ENCODE measurements at regions of chr12 and their contacts with region 1.

Region 1: GRCh38 chr12:122895705-122896636 is at the start of gene VPS37B:
- DNase-seq: peak; percentile 87
- ATAC-seq: peak; percentile 40
- H3K4me3 Mint-ChIP-seq: peak within 1 kb of the TSS; percentile 97
- H3K27ac Mint-ChIP-seq: peak within 1 kb of the TSS; percentile 92
- H3K4me1 Mint-ChIP-seq: peaks cover 96% of the 10 kb centered on the region
- H3K27me3 Mint-ChIP-seq: no peaks in the 10 kb centered on the region
- CTCF ChIP-seq: no peak
- total RNA-seq, gene VPS37B: 51.4 and 54.1 TPM in 2 replicates

Region 2: GRCh38 chr12:122399592-122400373 is 496.2 kb before region 1 on chr12:
- CTCF ChIA-PET with region 1: no interaction called
- POLR2A ChIA-PET with region 1: no interaction called
- intact Hi-C with region 1: loop called (anchors 10 kb)
- DNase-seq: peak; percentile 26
- ATAC-seq: peak; percentile 51
- H3K4me3 Mint-ChIP-seq: peak overlapping the region; percentile 44
- H3K27ac Mint-ChIP-seq: peak overlapping the region; percentile 75
- H3K4me1 Mint-ChIP-seq: peaks cover 38% of the 10 kb centered on the region
- H3K27me3 Mint-ChIP-seq: no peaks in the 10 kb centered on the region
- CTCF ChIP-seq: peak; percentile 47

Region 3: GRCh38 chr12:122860346-122861090 is 35.5 kb before region 1 on chr12:
- CTCF ChIA-PET with region 1: interaction called, 6 read pairs
- POLR2A ChIA-PET with region 1: interaction called, 16 read pairs
- intact Hi-C with region 1: loop called (anchors 5 kb)
- DNase-seq: peak; percentile 76
- ATAC-seq: peak; percentile 72
- H3K4me3 Mint-ChIP-seq: no peak overlapping the region
- H3K27ac Mint-ChIP-seq: no peak overlapping the region
- H3K4me1 Mint-ChIP-seq: peaks cover 49% of the 10 kb centered on the region
- H3K27me3 Mint-ChIP-seq: no peaks in the 10 kb centered on the region
- CTCF ChIP-seq: peak; percentile 72

Region 4: DNA sequence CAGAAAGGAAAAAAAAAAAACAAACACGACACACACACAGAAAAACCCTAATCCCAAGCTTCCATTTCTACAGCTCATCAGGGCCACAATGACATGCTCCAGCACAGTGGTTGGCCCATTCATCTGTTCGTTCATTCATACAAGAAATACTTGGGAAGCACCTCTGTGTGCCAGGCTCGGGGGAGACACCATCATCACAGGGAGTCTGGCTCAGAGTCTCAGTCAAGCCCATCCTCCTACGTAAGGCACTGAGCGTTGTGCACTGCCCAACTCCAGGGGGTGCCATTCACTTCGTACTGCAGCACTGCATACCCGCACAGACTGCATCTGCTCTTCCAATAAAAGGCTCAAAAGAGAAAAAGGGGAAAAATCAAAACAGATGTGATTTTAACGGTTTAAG is 15.3 kb before region 1 on chr12:
- CTCF ChIA-PET with region 1: interaction called, 12 read pairs
- POLR2A ChIA-PET with region 1: interaction called, 99 read pairs
- intact Hi-C with region 1: loop called (anchors 2 kb)
- DNase-seq: no peak
- ATAC-seq: peak; percentile 70
- H3K4me3 Mint-ChIP-seq: peak overlapping the region; percentile 26
- H3K27ac Mint-ChIP-seq: peak overlapping the region; percentile 32
- H3K4me1 Mint-ChIP-seq: peaks cover 94% of the 10 kb centered on the region
- H3K27me3 Mint-ChIP-seq: no peaks in the 10 kb centered on the region
- CTCF ChIP-seq: no peak

Region 5: DNA sequence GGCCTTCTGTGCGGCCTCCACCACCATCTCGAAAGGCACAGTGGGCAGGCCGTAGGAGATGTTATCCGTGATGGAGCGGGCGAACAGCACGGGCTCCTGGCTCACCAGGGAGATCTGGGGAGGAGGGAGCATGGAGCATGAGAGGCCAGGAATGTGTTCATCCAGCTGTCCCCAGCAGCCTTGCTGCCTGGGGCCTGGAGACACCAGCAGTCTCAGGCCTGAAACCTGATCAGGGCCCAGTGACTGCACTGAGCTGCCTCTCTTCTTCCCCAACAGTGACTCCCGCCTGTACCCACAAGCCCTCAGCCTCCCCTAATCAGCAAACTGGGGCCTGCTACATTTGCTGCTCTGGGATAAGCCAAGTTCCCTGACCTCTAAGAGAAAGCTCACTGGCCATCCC is 39.3 kb after region 1 on chr12:
- CTCF ChIA-PET with region 1: no interaction called
- POLR2A ChIA-PET with region 1: no interaction called
- intact Hi-C with region 1: loop called (anchors 5 kb)
- DNase-seq: no peak
- ATAC-seq: no peak
- H3K4me3 Mint-ChIP-seq: no peak overlapping the region
- H3K27ac Mint-ChIP-seq: no peak overlapping the region
- H3K4me1 Mint-ChIP-seq: peaks cover 24% of the 10 kb centered on the region
- H3K27me3 Mint-ChIP-seq: no peaks in the 10 kb centered on the region
- CTCF ChIP-seq: no peak

Region 6: GRCh38 chr12:123271001-123271729 is 375.2 kb after region 1 on chr12:
- CTCF ChIA-PET with region 1: no interaction called
- POLR2A ChIA-PET with region 1: no interaction called
- intact Hi-C with region 1: no loop called
- DNase-seq: peak; percentile 76
- ATAC-seq: peak; percentile 81
- H3K4me3 Mint-ChIP-seq: no peak overlapping the region
- H3K27ac Mint-ChIP-seq: no peak overlapping the region
- H3K4me1 Mint-ChIP-seq: peaks cover 31% of the 10 kb centered on the region
- H3K27me3 Mint-ChIP-seq: no peaks in the 10 kb centered on the region
- CTCF ChIP-seq: no peak

Measured in activated B cell treated with CpG ODN at 0.5 μM for 24 hours (primary cell).